ENCODE measurements at regions of chr22 and their contacts with region 1.

Region 1: GRCh38 chr22:33362702-33363101 is 304.5 kb upstream of the SYN3 start:
- DNase-seq: no peak
- ATAC-seq: no peak
- H3K4me3 Mint-ChIP-seq: no peak overlapping the region
- H3K27ac Mint-ChIP-seq: peak overlapping the region; percentile 56
- H3K4me1 Mint-ChIP-seq: peaks cover 24% of the 10 kb centered on the region
- H3K27me3 Mint-ChIP-seq: no peaks in the 10 kb centered on the region
- CTCF ChIP-seq: no peak

Region 2: GRCh38 chr22:33325235-33326004 is 37.3 kb before region 1 on chr22:
- CTCF ChIA-PET with region 1: no interaction called
- POLR2A ChIA-PET with region 1: no interaction called
- intact Hi-C with region 1: loop called (anchors 2 kb)
- DNase-seq: no peak
- ATAC-seq: peak; percentile 87
- H3K4me3 Mint-ChIP-seq: peak overlapping the region; percentile 63
- H3K27ac Mint-ChIP-seq: peak overlapping the region; percentile 86
- H3K4me1 Mint-ChIP-seq: peaks cover 64% of the 10 kb centered on the region
- H3K27me3 Mint-ChIP-seq: no peaks in the 10 kb centered on the region
- CTCF ChIP-seq: no peak

Region 3: DNA sequence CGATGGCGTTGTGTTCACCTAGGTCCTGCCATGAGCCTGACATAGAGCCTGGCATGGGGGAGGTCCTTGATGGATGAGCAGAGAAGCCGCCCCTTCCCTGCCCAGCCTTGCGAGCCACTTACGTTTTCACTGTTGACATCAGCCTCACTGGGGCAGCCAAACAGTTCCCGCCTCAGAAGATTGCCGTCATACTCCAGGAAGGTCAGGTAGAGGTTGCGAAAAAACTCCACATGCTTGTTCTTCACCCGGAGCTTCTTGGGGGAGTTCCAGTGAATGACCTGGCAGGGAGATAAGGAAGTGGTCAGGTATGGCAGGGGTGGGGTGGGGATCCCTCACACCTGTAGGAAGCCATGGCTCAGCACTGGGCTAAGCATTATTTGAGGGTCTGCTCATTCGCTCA is 25.2 kb before region 1 on chr22:
- CTCF ChIA-PET with region 1: no interaction called
- POLR2A ChIA-PET with region 1: no interaction called
- intact Hi-C with region 1: no loop called
- DNase-seq: no peak
- ATAC-seq: no peak
- H3K4me3 Mint-ChIP-seq: no peak overlapping the region
- H3K27ac Mint-ChIP-seq: no peak overlapping the region
- H3K4me1 Mint-ChIP-seq: peaks cover 5% of the 10 kb centered on the region
- H3K27me3 Mint-ChIP-seq: no peaks in the 10 kb centered on the region
- CTCF ChIP-seq: no peak